Body of pancreas (tissue), 4 donors: ENCODE measurements at regions of chr22 and their contacts with region 1.

Region 1: DNA sequence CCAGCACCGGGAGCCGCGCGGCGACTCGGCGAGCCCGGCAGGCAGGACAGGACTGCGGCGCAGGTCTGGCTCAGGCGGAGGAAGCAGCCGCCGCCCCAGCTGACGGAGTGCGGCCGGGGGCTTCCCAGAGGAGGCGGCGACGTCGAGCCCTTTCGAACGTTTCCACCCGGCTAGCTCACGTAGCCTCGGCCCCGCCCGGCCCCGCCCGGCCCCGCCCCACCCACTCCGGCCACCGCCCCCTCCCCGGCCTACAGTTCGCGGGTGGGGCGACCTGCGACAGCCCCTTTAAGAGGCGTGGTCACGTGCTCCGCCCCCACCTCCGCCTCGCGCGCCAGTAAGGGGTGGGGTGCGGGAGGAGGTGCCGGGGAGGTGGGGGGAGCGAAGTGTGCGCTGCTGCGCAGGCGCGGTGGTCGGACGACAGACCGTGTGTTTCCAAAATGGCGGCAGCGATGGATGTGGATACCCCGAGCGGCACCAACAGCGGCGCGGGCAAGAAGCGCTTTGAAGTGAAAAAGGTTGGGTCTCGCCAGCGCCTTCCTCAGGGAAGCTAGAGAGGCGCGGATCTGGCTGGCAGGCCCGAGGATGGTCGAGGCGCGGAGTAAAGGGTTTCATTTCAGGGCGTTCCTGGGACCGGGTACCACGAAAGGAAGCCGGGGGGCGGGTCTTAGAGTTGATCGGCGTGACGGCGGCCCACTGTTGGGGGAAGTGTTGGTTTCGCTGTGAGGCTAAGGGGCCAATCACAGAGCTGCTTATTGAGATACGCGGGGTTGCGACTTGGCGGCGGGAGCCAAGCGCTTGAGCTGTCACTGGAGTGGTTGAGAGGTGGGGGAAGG is at the start of gene RBX1:
- DNase-seq: peak; percentile 98 to 99 (median 98)
- ATAC-seq: peak; percentile 93
- H3K4me3 ChIP-seq: peak within 1 kb of the TSS; percentile 59 to 96
- H3K27ac ChIP-seq: peak within 1 kb of the TSS; percentile 78 to 97 (median 90)
- H3K4me1 ChIP-seq: peaks cover 28% of the 10 kb centered on the region
- H3K27me3 ChIP-seq: no peaks in the 10 kb centered on the region
- CTCF ChIP-seq: no peak
- POLR2A ChIP-seq: peak; percentile 67 to 91 (median 86)
- total RNA-seq, gene RBX1: 6.9 to 20.2 TPM

Region 2: GRCh38 chr22:41091132-41092022 is 140.2 kb after region 1 on chr22:
- intact Hi-C with region 1: loop called (anchors 5 kb)
- DNase-seq: peak; percentile 99 to 100 (median 100)
- ATAC-seq: peak; percentile 94
- H3K4me3 ChIP-seq: peak overlapping the region; percentile 73 to 97
- H3K27ac ChIP-seq: peak overlapping the region; percentile 98 to 100 (median 100)
- H3K4me1 ChIP-seq: peaks cover 31% of the 10 kb centered on the region
- H3K27me3 ChIP-seq: no peaks in the 10 kb centered on the region
- CTCF ChIP-seq: no peak
- POLR2A ChIP-seq: peak; percentile 84 to 93 (median 92)